ENCODE measurements at regions of chr3 and their contacts with region 1.

Region 1: DNA sequence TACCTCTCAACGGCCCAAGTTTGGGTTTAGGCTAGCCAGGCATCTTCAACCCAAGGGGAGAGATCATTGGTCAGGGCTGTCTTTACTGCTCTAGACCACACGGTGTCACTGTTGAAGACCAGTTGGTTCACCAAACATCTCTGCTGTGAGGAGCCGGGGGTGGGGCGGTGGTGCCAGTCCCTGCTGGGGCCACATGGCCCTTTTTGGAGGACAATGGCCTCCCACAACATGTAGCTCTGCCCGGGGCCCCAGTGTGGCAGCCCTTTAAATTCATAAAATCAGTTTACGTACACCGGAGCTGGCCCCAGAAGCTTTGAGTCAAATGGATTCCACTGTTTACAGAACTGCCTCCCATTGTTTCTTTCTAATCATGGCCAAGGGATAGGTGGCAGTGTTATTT is 19.1 kb upstream of the TM4SF18 start:
- DNase-seq: peak; percentile 49 to 61
- H3K4me3 ChIP-seq: no peak overlapping the region
- H3K27ac ChIP-seq: no peak overlapping the region
- H3K4me1 ChIP-seq: no peaks in the 10 kb centered on the region
- H3K27me3 ChIP-seq: no peaks in the 10 kb centered on the region
- CTCF ChIP-seq: peak; percentile 82

Region 2: GRCh38 chr3:147370349-147370748 is 1982.2 kb before region 1 on chr3:
- CTCF ChIA-PET with region 1: interaction called, 13 read pairs
- POLR2A ChIA-PET with region 1: no interaction called
- intact Hi-C with region 1: no loop called
- DNase-seq: no peak
- H3K4me3 ChIP-seq: no peak overlapping the region
- H3K27ac ChIP-seq: no peak overlapping the region
- H3K4me1 ChIP-seq: no peaks in the 10 kb centered on the region
- H3K27me3 ChIP-seq: no peaks in the 10 kb centered on the region
- CTCF ChIP-seq: no peak

Region 3: DNA sequence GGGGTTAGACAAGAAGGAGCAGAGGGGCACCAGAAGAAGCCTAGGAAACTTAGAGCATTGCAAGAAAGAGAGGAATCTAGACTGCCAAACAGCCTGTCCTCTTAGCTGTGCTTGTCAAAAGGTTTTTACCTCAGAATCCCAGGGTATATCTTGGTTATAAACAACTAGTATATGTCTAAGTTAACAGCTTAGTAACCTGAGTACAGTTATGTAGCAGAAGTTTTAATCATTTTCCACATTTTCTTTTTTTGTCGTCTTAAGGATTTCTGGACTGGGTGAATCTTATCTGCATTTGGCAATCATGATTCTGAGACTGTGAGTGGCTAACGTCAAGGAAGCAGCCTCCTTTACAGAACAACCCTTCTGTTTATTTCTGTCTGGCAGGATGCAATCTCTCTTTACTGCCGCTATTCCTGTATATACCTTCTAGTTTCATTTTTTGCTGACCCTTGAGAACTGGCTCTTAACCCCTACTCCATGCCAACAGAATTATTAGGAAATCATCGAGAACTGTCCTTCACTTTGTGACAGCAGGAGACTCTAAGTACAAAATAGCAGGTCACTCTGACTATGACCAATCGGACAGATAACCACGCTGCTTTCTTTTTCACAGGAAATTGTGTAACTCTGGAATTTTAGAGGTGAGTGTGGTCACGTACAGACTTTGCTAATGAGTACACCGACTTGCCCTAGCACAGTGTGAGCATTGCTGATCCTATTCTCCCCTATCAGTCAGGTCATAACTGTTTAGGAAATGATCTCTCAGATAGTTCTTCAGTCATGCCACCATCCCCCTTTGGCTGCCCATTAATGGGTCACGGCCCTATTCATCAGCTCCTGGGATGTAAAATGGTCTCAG is 127.6 kb before region 1 on chr3:
- CTCF ChIA-PET with region 1: no interaction called
- POLR2A ChIA-PET with region 1: no interaction called
- intact Hi-C with region 1: no loop called
- DNase-seq: peak; percentile 34 to 90
- H3K4me3 ChIP-seq: peak overlapping the region; percentile 50
- H3K27ac ChIP-seq: peak overlapping the region; percentile 85
- H3K4me1 ChIP-seq: peaks cover 20% of the 10 kb centered on the region
- H3K27me3 ChIP-seq: no peaks in the 10 kb centered on the region
- CTCF ChIP-seq: no peak

Region 4: GRCh38 chr3:149330609-149331331 is 21.8 kb before region 1 on chr3:
- CTCF ChIA-PET with region 1: no interaction called
- POLR2A ChIA-PET with region 1: no interaction called
- intact Hi-C with region 1: no loop called
- DNase-seq: no peak
- H3K4me3 ChIP-seq: no peak overlapping the region
- H3K27ac ChIP-seq: no peak overlapping the region
- H3K4me1 ChIP-seq: peaks cover 5% of the 10 kb centered on the region; the same call in 1 of the 2 replicates
- H3K27me3 ChIP-seq: no peaks in the 10 kb centered on the region
- CTCF ChIP-seq: no peak

Region 5: GRCh38 chr3:149366941-149367840 is 14.6 kb after region 1 on chr3:
- CTCF ChIA-PET with region 1: no interaction called
- POLR2A ChIA-PET with region 1: no interaction called
- intact Hi-C with region 1: no loop called
- DNase-seq: peak; percentile 86 to 99
- H3K4me3 ChIP-seq: 0 out of 2 replicates have a peak overlapping the region, but pooled peaks have one; percentile 6
- H3K27ac ChIP-seq: peak overlapping the region; percentile 99
- H3K4me1 ChIP-seq: peaks cover 63% of the 10 kb centered on the region
- H3K27me3 ChIP-seq: no peaks in the 10 kb centered on the region
- CTCF ChIP-seq: no peak

Region 6: GRCh38 chr3:149393345-149394160 is 41.0 kb after region 1 on chr3:
- CTCF ChIA-PET with region 1: interaction called, 3 read pairs
- POLR2A ChIA-PET with region 1: no interaction called
- intact Hi-C with region 1: loop called (anchors 2 kb)
- DNase-seq: peak; percentile 37 to 64
- H3K4me3 ChIP-seq: no peak overlapping the region
- H3K27ac ChIP-seq: no peak overlapping the region
- H3K4me1 ChIP-seq: peaks cover 70% of the 10 kb centered on the region
- H3K27me3 ChIP-seq: no peaks in the 10 kb centered on the region
- CTCF ChIP-seq: peak; percentile 71

Region 7: GRCh38 chr3:149480325-149481017 is 127.9 kb after region 1 on chr3:
- CTCF ChIA-PET with region 1: interaction called, 3 read pairs
- POLR2A ChIA-PET with region 1: no interaction called
- intact Hi-C with region 1: loop called (anchors 1 kb)
- DNase-seq: peak; percentile 81 to 89
- H3K4me3 ChIP-seq: no peak overlapping the region
- H3K27ac ChIP-seq: peak overlapping the region; percentile 46
- H3K4me1 ChIP-seq: peaks cover 19% of the 10 kb centered on the region
- H3K27me3 ChIP-seq: no peaks in the 10 kb centered on the region
- CTCF ChIP-seq: peak; percentile 87

Region 8: DNA sequence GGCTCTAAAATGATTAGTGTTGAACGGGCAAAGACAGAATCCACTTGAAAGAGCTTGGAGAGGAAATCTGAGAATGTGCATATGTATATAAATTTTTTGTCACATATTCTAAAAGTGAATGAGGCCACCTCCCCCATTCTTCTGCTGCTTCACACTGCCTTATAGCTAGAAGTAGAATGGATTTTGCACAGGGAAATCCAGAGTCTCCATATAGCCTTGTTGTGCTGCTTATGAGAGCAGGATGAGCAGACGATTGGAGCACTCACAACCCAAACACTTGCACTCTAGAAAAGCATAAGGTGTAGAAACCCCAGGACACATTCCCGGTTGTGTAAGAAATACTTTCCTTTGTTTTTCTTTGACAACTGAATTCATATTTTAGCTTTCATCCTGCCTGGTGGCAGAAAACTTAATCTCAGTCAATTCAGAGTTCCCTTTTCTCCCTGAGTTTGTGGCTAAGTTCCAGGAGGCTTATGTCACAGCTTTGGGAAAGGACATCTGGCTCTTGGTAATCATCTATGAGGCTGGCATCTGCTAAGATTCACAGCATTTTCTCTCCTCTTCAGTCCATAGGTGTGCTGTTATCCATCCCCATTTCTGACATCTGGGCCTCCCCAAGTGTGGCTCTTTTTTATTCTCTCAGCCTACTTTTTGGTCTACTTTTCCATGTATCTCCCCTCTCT is 806.5 kb after region 1 on chr3:
- CTCF ChIA-PET with region 1: no interaction called
- POLR2A ChIA-PET with region 1: interaction called, 12 read pairs
- intact Hi-C with region 1: no loop called
- DNase-seq: no peak
- H3K4me3 ChIP-seq: no peak overlapping the region
- H3K27ac ChIP-seq: no peak overlapping the region
- H3K4me1 ChIP-seq: no peaks in the 10 kb centered on the region
- H3K27me3 ChIP-seq: no peaks in the 10 kb centered on the region
- CTCF ChIP-seq: no peak

Measured in PC-9 (cell line).